ENCODE measurements at regions of chr21 and their contacts with region 1.

Region 1: DNA sequence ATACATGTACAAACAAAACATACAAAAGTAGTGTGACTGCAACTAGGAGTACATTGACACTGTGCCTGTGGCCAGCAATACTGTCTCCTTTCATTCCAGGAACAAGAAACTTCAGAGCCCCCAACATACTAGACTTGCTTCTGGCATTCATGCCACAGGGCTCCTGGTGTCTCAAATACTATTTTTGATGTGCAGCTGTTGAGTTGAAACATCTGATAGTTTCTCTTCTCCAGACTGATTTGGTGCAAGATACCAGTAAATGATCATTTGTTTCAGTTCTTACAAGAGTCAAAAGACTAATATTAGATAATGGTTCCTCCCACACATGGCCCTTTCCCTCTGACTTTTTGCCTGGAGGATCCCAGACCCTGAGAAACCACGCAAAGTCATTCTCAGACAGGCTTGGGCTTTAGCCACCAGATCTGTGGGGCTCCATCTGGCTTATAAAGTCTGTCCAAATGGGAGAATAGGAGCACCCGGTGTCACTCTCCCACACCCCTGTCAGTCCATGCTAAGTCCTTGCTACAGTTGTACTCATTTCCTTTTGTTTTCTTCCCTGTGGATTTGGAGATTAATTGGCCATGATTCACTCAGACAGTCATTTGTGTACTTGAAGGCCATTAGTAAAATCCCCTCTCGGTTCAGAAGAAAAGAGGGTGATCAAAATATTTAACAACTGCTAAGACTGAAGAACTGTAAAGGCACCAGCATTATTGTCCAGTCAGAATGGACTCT is 163.5 kb upstream of the RUNX1 start:
- DNase-seq: peak in 1 of 2 donors; percentile 45
- ATAC-seq: peak in 7 of 8 donors; percentile 25 to 75 (median 48)
- H3K4me3 ChIP-seq: no peak overlapping the region
- H3K27ac ChIP-seq: peak overlapping the region in 7 of 10 donors; percentile 23 to 84 (median 52)
- H3K4me1 ChIP-seq: peaks cover 2 to 30% (median 19%) of the 10 kb centered on the region in 9 donors
- H3K27me3 ChIP-seq: no peaks in the 10 kb centered on the region
- CTCF ChIP-seq: no peak

Region 2: GRCh38 chr21:35150562-35151226 is 61.9 kb before region 1 on chr21:
- intact Hi-C with region 1: no loop called
- DNase-seq: no peak
- ATAC-seq: no peak
- H3K4me3 ChIP-seq: no peak overlapping the region
- H3K27ac ChIP-seq: no peak overlapping the region
- H3K4me1 ChIP-seq: no peaks in the 10 kb centered on the region
- H3K27me3 ChIP-seq: peaks cover 0 to 12% (median 4%) of the 10 kb centered on the region in 7 donors
- CTCF ChIP-seq: no peak

Region 3: DNA sequence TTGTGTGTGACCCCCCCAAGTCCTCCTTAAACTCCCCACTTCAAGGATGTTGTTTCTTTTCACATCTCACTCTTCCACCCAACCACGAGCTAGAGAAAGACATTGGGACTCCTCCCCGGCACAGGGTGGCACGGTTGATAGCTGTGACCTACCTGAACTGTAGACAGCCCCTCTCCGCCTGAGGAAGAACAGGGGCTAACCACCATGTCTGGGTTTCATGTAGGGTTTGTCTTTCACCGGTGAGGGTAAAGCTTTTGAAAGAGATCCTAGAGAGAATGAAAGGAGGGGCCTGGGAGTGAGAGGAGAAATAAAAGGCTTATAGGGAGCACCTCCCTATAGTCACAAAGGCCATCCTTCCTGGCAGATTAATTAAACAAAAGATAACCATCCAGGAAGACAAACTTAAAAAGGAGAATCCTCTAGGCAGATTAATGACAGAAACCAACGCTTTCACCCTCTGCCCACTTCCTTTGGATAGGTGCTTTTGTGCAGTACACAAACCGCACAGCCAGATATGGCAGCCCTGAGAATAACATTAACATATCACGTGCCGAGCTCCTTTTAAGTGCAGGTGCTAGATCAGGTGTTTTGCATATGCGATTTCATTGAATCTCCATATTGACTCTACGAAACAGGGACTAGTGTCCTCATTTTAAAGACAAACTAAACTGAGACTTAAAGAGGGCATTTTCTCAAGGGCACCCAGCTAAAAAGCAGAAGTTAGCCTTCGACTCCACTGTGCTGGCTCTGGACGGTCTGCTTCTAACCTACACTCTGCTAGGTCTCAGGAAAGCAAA is 14.6 kb after region 1 on chr21:
- intact Hi-C with region 1: no loop called
- DNase-seq: no peak
- ATAC-seq: no peak
- H3K4me3 ChIP-seq: no peak overlapping the region
- H3K27ac ChIP-seq: peak overlapping the region in 3 of 10 donors; percentile 55 to 63 (median 55)
- H3K4me1 ChIP-seq: peaks cover 0 to 40% (median 26%) of the 10 kb centered on the region in 9 donors
- H3K27me3 ChIP-seq: no peaks in the 10 kb centered on the region
- CTCF ChIP-seq: no peak

Region 4: GRCh38 chr21:35256467-35256988 is 44.0 kb after region 1 on chr21:
- intact Hi-C with region 1: loop called in 1 of 10 experiments (anchors 5 kb)
- DNase-seq: peak; percentile 75 to 83
- ATAC-seq: peak; percentile 81 to 100 (median 96)
- H3K4me3 ChIP-seq: peak overlapping the region in 3 of 10 donors; percentile 1 to 27 (median 17)
- H3K27ac ChIP-seq: peak overlapping the region in 8 of 10 donors; percentile 40 to 78 (median 62)
- H3K4me1 ChIP-seq: peaks cover 3 to 32% (median 18%) of the 10 kb centered on the region in 9 donors
- H3K27me3 ChIP-seq: no peaks in the 10 kb centered on the region
- CTCF ChIP-seq: peak in 2 of 9 donors; percentile 12 to 14

Measured in heart right ventricle (tissue), 16 donors.